AG04449 (cell line): ENCODE measurements at regions of chr17 and their contacts with region 1.

Region 1: GRCh38 chr17:43576563-43577229 is 30.6 kb upstream of the ETV4 start:
- DNase-seq: no peak
- H3K4me3 ChIP-seq: no peak overlapping the region
- CTCF ChIP-seq: peak; percentile 80

Region 2: GRCh38 chr17:43483674-43484372 is 92.9 kb before region 1 on chr17 and contains the start of gene DHX8:
- CTCF ChIA-PET with region 1: interaction called, 14 read pairs
- POLR2A ChIA-PET with region 1: no interaction called
- DNase-seq: peak; percentile 98
- H3K4me3 ChIP-seq: peak within 1 kb of the TSS; percentile 96
- CTCF ChIP-seq: peak; percentile 100

Region 3: DNA sequence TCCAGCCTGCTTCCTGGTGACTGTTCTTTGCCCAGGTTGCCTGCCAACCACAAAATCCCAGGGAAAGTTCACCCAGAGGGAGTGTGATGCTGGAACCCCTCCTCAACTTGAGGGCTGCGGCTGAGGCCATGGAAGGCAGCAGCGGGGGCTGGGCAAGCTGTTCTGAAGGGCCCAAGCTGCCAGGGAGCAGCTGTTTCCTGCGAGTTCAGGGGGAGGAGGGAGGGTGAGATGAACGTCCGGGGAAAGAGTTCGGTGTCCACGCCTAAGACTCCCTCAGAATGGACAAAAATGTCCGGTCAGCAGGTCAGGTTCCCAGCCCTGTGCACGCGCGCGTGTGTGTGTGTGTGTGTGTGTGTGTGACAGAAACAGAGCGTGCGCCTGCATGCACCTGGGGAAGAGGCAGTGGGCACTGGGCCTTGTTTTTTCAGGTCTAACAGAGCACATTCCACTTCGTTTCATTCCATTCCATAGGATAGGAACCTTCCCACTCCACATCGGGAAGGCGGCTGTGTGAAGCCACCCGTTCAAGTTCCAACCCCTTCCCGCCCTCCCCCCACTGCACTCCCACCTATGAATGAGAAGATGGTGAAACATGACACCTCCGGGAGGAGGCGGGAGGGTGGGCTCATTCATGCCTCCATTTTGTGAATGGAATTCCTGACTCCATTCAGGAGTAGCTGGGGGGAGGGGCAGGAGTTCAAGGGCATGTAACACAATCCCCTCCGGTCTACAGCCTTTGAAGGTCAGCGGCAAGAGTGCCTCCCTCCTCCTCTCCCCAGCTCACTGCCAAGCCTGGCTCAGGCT is 46.2 kb before region 1 on chr17:
- CTCF ChIA-PET with region 1: interaction called, 112 read pairs
- POLR2A ChIA-PET with region 1: no interaction called
- DNase-seq: no peak
- H3K4me3 ChIP-seq: peak overlapping the region; percentile 28
- CTCF ChIP-seq: no peak

Region 4: DNA sequence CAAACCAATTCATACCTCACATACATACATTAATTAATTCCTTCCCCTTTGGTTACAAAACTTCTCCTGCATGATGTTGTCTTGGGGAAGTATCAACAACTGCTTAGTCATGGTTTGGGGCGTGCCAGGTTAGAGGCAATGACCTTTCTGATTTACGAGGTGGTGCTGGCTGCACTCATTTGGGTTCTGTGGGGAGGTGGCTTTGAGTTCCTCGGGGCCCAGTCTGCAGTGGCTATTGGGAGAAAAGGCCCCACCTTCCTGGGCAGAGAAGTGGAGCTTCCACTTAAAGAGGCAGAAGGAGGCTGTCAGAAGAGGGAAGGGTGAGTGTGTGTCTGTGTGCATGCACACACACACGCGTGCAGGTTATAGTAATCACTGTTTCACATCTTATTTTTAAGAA is 20.4 kb before region 1 on chr17:
- CTCF ChIA-PET with region 1: interaction called, 86 read pairs
- POLR2A ChIA-PET with region 1: no interaction called
- DNase-seq: no peak
- H3K4me3 ChIP-seq: no peak overlapping the region
- CTCF ChIP-seq: no peak

Region 5: DNA sequence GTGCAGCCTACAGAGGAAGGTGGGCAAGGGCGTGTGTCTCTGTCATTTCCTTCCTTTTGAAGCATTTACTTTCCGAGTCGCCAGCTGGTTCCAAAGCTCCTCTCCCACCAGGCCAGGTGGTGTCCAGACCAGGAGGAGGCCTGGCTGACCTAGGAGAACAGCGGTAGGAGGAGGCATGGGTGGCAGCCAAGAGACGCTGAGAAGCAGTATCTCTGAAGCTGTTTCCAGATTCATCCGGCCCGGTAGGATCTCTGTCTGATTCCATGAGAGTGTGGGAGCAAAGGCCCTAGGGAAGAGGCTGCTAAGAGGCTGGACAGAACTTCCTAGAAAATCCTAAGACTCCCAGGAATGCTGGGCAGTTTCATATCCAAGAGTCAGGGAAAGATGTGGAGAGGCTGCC is 64.7 kb after region 1 on chr17:
- CTCF ChIA-PET with region 1: interaction called, 14 read pairs
- POLR2A ChIA-PET with region 1: no interaction called
- DNase-seq: no peak
- H3K4me3 ChIP-seq: no peak overlapping the region
- CTCF ChIP-seq: no peak

Region 6: DNA sequence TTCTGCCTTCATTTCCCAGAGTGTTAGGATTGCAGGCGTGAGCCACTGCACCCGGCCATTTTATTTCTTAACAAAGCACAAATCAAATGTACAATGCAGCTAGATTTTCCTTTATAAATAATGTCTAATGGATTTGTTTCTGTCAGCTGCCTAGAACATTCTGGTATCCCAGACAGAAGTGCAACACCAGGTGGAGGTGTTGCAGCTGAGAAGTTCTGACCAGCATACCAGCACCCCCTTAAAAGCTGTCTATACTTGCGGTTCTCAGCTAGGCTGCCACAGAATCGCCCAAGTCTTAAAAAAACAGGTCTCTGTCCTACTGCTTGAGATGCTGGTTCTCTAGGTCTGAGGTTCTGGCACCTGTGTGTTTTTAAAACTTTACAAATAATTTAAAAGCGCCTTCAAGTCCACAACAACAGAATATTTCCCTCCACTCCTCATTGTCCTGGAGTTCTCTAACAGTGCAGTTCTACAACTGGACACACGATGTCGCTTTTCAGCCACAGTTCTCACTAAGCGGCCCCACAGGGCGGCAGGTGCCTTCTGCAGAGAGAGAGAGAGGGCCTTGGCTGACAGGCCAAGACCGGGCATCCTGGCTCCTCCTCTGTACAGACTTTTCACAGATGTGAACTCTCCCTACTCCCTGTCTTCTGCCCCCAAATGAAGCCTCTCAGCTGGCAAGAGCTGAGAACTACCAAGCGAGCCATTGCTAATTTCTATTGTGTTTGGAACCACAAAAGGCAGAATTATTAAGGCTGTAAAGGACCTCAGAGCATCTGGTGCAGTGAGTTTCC is 117.6 kb after region 1 on chr17:
- CTCF ChIA-PET with region 1: interaction called, 137 read pairs
- POLR2A ChIA-PET with region 1: no interaction called
- DNase-seq: no peak
- H3K4me3 ChIP-seq: no peak overlapping the region
- CTCF ChIP-seq: peak; percentile 78

Region 7: DNA sequence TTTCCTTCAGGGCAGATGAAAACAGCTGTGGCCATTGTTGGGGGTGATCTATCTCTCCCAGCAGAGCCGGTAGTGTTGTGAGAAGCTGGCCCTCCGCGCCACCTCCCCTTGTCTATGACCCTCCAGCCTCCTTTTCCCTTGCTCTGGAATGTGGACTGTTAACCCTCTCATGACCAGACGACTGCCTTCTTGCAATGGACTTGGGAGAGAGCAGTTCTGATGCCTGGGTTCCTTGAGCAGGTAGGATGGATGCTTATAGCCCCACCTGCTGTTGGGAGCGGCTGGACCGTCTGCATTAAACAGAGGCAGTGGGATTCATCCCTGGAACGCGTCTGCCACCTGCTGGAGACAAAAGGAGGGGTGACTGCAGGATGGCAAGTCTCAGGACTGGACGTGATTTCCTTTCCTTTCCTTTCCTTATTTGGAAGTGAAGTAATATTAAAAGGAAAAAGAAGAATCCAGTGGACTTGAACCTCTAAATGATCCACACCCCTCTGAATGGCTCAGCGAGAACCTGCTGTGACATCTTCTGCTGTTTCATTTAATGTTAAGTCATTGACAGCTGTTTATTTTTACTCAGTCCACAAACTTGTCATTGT is 183.7 kb after region 1 on chr17:
- CTCF ChIA-PET with region 1: interaction called, 122 read pairs
- POLR2A ChIA-PET with region 1: no interaction called
- DNase-seq: peak; percentile 65
- H3K4me3 ChIP-seq: no peak overlapping the region
- CTCF ChIP-seq: peak; percentile 94